Caco-2 (cell line): ENCODE measurements at regions of chr4 and their contacts with region 1.

Region 1: DNA sequence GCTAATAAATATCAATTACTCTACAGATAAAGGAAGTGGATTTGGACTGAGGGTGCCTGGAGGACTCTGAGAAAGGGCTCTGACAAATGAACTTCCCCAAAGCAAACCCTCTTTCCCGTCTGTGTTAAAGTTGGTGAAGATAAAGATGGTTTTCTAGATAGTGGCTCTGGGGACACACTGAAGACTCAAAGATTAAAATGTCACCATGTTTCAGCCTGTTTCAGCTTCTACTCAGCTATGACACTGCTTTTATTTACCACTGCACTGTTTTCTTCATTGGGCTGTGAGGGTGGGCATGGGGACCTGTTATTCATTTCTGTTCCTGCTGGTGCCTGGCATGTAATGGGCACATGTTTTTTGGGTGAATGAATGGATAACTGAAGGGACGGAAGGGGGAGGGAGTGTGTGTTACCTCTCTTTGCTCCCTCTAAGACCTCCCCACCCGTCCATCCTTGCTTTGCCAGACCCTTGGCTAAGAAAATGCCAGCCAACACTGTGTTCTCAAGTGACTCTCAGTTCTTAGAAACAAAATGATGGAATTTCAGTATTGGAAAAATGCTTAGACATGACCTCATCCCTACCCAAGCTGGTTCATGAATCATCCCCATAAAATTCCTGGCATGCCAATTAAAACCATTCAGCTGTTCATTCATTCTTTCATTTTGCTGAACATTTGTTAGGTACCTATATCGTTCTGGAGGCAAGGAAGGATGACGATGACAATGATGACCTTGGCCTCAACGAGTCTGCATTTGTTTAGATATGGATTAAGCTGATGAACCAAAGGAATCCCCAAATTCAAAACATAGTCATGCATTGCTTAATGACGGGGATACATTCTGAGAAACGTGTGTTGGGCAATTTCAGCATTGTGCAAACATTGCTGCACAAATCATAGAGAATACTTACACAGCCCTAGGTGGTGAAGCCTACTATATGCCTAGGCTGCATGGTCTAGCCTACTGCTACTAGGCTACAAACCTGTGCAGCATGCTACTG is 13.4 kb upstream of the STK32B start:
- DNase-seq: peak in 1 of 2 experiments; percentile 37
- H3K4me3 ChIP-seq: no peak overlapping the region
- H3K4me3 Mint-ChIP-seq: no peak overlapping the region
- H3K27ac Mint-ChIP-seq: peak overlapping the region; percentile 44
- H3K4me1 ChIP-seq: 0 out of 2 replicates have a peak, but pooled peaks cover 9% of the 10 kb centered on the region
- H3K4me1 Mint-ChIP-seq: peaks cover 6% of the 10 kb centered on the region
- H3K27me3 ChIP-seq: no peaks in the 10 kb centered on the region
- H3K27me3 Mint-ChIP-seq: no peaks in the 10 kb centered on the region
- CTCF ChIP-seq: no peak

Region 2: GRCh38 chr4:4443821-4444220 is 594.0 kb before region 1 on chr4:
- CTCF ChIA-PET with region 1: no interaction called
- POLR2A ChIA-PET with region 1: no interaction called
- intact Hi-C with region 1: no loop called
- DNase-seq: peak; percentile 53 to 74
- H3K4me3 ChIP-seq: no peak overlapping the region
- H3K4me3 Mint-ChIP-seq: no peak overlapping the region
- H3K27ac Mint-ChIP-seq: peak overlapping the region; percentile 36
- H3K4me1 ChIP-seq: peaks cover 22% of the 10 kb centered on the region
- H3K4me1 Mint-ChIP-seq: peaks cover 8% of the 10 kb centered on the region
- H3K27me3 ChIP-seq: no peaks in the 10 kb centered on the region
- H3K27me3 Mint-ChIP-seq: no peaks in the 10 kb centered on the region
- CTCF ChIP-seq: no peak

Region 3: DNA sequence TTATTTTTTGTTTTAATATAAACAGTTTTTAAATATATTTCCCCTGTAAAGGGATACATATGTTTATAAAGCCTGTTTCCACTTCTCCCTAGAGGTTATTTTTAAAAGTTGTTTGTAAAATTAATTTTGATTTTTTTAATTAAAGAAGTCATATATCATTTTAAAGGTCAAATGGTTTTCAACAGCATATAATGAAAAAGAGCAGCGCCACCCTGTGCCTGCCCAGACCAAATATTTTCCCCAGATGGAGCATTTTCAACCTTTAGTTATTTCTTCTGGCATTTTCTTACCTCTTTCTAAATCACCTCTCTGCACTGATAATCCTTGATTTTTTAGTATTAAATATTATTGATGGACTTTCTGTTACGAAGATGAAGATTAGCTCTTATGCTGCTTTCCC is 157.4 kb before region 1 on chr4:
- CTCF ChIA-PET with region 1: no interaction called
- POLR2A ChIA-PET with region 1: no interaction called
- intact Hi-C with region 1: no loop called
- DNase-seq: no peak
- H3K4me3 ChIP-seq: no peak overlapping the region
- H3K4me3 Mint-ChIP-seq: no peak overlapping the region
- H3K27ac Mint-ChIP-seq: no peak overlapping the region
- H3K4me1 ChIP-seq: no peaks in the 10 kb centered on the region
- H3K4me1 Mint-ChIP-seq: peaks cover 16% of the 10 kb centered on the region
- H3K27me3 ChIP-seq: no peaks in the 10 kb centered on the region
- H3K27me3 Mint-ChIP-seq: no peaks in the 10 kb centered on the region
- CTCF ChIP-seq: peak; percentile 22 to 28

Region 4: GRCh38 chr4:5012244-5012885 is 25.5 kb before region 1 on chr4:
- CTCF ChIA-PET with region 1: interaction called, 3 read pairs
- POLR2A ChIA-PET with region 1: no interaction called
- intact Hi-C with region 1: loop called (anchors 1 kb)
- DNase-seq: peak in 1 of 2 experiments; percentile 22
- H3K4me3 ChIP-seq: no peak overlapping the region
- H3K4me3 Mint-ChIP-seq: no peak overlapping the region
- H3K27ac Mint-ChIP-seq: peak overlapping the region; percentile 70
- H3K4me1 ChIP-seq: no peaks in the 10 kb centered on the region
- H3K4me1 Mint-ChIP-seq: peaks cover 8% of the 10 kb centered on the region
- H3K27me3 ChIP-seq: no peaks in the 10 kb centered on the region
- H3K27me3 Mint-ChIP-seq: peaks cover 4% of the 10 kb centered on the region
- CTCF ChIP-seq: no peak

Region 5: GRCh38 chr4:5069901-5070300 is 32.0 kb after region 1 on chr4:
- CTCF ChIA-PET with region 1: no interaction called
- POLR2A ChIA-PET with region 1: no interaction called
- intact Hi-C with region 1: no loop called
- DNase-seq: no peak
- H3K4me3 ChIP-seq: no peak overlapping the region
- H3K4me3 Mint-ChIP-seq: no peak overlapping the region
- H3K27ac Mint-ChIP-seq: no peak overlapping the region
- H3K4me1 ChIP-seq: no peaks in the 10 kb centered on the region
- H3K4me1 Mint-ChIP-seq: no peaks in the 10 kb centered on the region
- H3K27me3 ChIP-seq: no peaks in the 10 kb centered on the region
- H3K27me3 Mint-ChIP-seq: no peaks in the 10 kb centered on the region
- CTCF ChIP-seq: no peak

Region 6: GRCh38 chr4:5470318-5471198 is 432.7 kb after region 1 on chr4:
- CTCF ChIA-PET with region 1: no interaction called
- POLR2A ChIA-PET with region 1: no interaction called
- intact Hi-C with region 1: no loop called
- DNase-seq: no peak
- H3K4me3 ChIP-seq: no peak overlapping the region
- H3K4me3 Mint-ChIP-seq: no peak overlapping the region
- H3K27ac Mint-ChIP-seq: no peak overlapping the region
- H3K4me1 ChIP-seq: no peaks in the 10 kb centered on the region
- H3K4me1 Mint-ChIP-seq: no peaks in the 10 kb centered on the region
- H3K27me3 ChIP-seq: no peaks in the 10 kb centered on the region
- H3K27me3 Mint-ChIP-seq: peaks cover 3% of the 10 kb centered on the region
- CTCF ChIP-seq: no peak